Right cardiac atrium (tissue), 5 donors: ENCODE measurements at regions of chr1 and their contacts with region 1.

Region 1: DNA sequence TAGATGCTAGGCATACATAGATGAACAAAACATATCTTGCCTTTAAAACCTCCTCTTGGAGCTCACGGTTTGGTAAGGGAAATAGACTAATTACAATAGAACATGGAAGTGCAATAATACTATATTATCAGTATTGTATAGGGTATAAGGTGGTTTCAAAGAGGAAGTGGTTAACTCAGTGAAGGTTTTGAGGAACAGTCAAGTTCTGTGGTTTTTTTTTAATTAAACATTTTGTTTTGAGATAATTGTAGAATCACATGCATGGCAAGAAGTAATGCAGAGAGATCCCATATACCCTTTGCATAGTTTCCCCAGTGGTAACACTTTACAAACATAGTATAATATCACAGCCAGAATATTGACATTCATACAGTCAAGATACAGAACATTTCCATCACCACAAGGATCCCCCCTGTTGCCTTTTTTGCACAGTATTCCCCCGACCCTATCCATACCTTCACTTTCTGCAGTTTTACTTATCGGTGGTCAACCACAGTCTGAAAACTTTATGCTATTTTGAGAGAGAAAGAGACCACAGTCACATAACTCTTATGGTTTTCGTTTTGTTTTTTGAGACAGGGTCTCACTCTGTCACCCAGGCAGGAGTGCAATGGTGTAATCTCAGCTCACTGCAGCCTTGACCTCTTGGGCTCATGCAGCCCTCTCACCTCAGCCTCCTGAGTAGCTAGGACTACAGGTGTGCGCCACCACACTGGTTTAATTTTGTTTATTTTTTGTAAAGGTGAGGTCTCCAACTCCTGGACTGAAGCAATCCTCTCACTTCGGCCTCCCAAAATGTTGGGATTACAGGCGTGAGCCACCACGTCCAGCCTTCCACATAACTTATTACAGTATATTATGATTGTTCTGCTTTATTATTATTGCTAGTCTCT is 60.5 kb upstream of the KIAA1614 start:
- DNase-seq: no peak
- ATAC-seq: no peak
- H3K4me3 ChIP-seq: no peak overlapping the region
- H3K27ac ChIP-seq: no peak overlapping the region
- H3K4me1 ChIP-seq: no peaks in the 10 kb centered on the region
- H3K27me3 ChIP-seq: no peaks in the 10 kb centered on the region

Region 2: GRCh38 chr1:180643693-180644092 is 208.5 kb before region 1 on chr1:
- intact Hi-C with region 1: loop called in 1 of 4 experiments (anchors 10 kb)
- DNase-seq: no peak
- ATAC-seq: peak in 1 of 2 donors; percentile 53
- H3K4me3 ChIP-seq: no peak overlapping the region
- H3K27ac ChIP-seq: no peak overlapping the region
- H3K4me1 ChIP-seq: no peaks in the 10 kb centered on the region
- H3K27me3 ChIP-seq: no peaks in the 10 kb centered on the region